ENCODE measurements at regions of chr6 and their contacts with region 1.

Region 1: GRCh38 chr6:139003751-139004150 is 15.7 kb upstream of the REPS1 start:
- DNase-seq: no peak
- ATAC-seq: no peak
- H3K4me3 ChIP-seq: no peak overlapping the region
- H3K4me3 Mint-ChIP-seq: no peak overlapping the region
- H3K27ac ChIP-seq: no peak overlapping the region
- H3K27ac Mint-ChIP-seq: no peak overlapping the region
- H3K4me1 ChIP-seq: no peaks in the 10 kb centered on the region
- H3K4me1 Mint-ChIP-seq: peaks cover 0 to 3% (median 0%) of the 10 kb centered on the region in 7 donors
- H3K27me3 ChIP-seq: no peaks in the 10 kb centered on the region
- H3K27me3 Mint-ChIP-seq: peaks cover 0 to 4% (median 4%) of the 10 kb centered on the region in 5 donors

Region 2: GRCh38 chr6:138773177-138774091 is 230.3 kb before region 1 on chr6 and contains the start of gene CCDC28A:
- CTCF ChIA-PET with region 1: no interaction called
- POLR2A ChIA-PET with region 1: no interaction called
- intact Hi-C with region 1: no loop called
- DNase-seq: peak; percentile 86 to 98 (median 97)
- ATAC-seq: peak; percentile 93
- H3K4me3 ChIP-seq: peak within 1 kb of the TSS; percentile 94
- H3K4me3 Mint-ChIP-seq: peak within 1 kb of the TSS; percentile 91 to 100 (median 99)
- H3K27ac ChIP-seq: peak within 1 kb of the TSS; percentile 87
- H3K27ac Mint-ChIP-seq: peak within 1 kb of the TSS; percentile 96 to 100 (median 100)
- H3K4me1 ChIP-seq: peaks cover 6 to 10% of the 10 kb centered on the region in 2 donors
- H3K4me1 Mint-ChIP-seq: peaks cover 4 to 39% (median 36%) of the 10 kb centered on the region in 7 donors
- H3K27me3 ChIP-seq: no peaks in the 10 kb centered on the region
- H3K27me3 Mint-ChIP-seq: no peaks in the 10 kb centered on the region
- total RNA-seq, gene CCDC28A: 19.9 to 34.2 (median 25.6) TPM

Region 3: GRCh38 chr6:138847884-138848283 is 155.9 kb before region 1 on chr6:
- CTCF ChIA-PET with region 1: no interaction called
- POLR2A ChIA-PET with region 1: no interaction called
- intact Hi-C with region 1: no loop called
- DNase-seq: no peak
- ATAC-seq: no peak
- H3K4me3 ChIP-seq: no peak overlapping the region
- H3K4me3 Mint-ChIP-seq: no peak overlapping the region
- H3K27ac ChIP-seq: no peak overlapping the region
- H3K27ac Mint-ChIP-seq: no peak overlapping the region
- H3K4me1 ChIP-seq: no peaks in the 10 kb centered on the region
- H3K4me1 Mint-ChIP-seq: peaks cover 0 to 1% (median 0%) of the 10 kb centered on the region in 7 donors
- H3K27me3 ChIP-seq: no peaks in the 10 kb centered on the region
- H3K27me3 Mint-ChIP-seq: peaks cover 0 to 5% (median 0%) of the 10 kb centered on the region in 5 donors

Region 4: DNA sequence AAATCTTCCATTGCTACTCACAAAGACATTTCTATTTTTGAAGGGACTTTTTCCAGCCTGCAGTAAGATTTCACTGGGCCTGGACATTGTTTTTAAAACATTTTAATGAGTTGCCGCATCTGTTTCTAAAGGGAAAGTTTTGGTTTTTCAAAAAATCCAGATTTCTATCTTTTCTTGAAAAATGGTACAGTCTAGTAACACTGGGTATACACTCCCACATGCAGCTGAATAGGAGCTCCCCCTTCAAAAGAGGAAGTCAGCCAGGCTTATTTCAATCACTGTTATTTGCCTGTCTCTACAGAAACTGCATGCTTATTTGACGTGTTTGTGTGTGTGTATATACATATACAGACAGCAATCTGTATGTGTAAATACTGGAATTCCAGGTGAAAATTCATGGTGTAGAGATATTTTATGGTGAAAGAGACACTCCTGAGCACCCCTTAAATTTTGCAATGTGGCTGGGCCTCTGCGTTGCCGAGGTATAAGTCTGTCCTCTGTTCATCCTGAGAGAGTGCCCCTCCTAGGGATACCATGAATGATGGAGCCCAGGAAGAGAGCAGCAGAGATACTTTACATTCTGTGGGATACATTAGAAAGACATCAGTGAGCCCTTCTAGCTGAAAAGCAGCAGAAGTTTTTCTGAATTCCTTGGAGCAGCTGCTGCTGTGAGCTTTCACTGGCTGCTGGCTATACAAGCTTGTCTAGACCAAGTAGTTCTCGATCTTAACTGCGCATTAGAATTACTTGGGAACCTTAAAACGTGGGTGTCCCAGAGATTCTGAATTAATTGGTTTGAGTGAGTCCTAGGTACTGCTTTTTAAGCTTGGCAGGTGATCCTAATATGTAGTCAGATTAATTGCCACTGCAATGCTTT is 12.8 kb after region 1 on chr6:
- CTCF ChIA-PET with region 1: no interaction called
- POLR2A ChIA-PET with region 1: no interaction called
- intact Hi-C with region 1: loop called in 1 of 2 experiments (anchors 2 kb)
- DNase-seq: peak in 3 of 9 donors; percentile 7 to 8 (median 7)
- ATAC-seq: peak; percentile 52
- H3K4me3 ChIP-seq: no peak overlapping the region
- H3K4me3 Mint-ChIP-seq: peak overlapping the region in 6 of 10 donors; percentile 7 to 60 (median 40)
- H3K27ac ChIP-seq: no peak overlapping the region
- H3K27ac Mint-ChIP-seq: peak overlapping the region in 2 of 9 donors; percentile 63 to 73
- H3K4me1 ChIP-seq: peaks cover 0 to 5% of the 10 kb centered on the region in 2 donors
- H3K4me1 Mint-ChIP-seq: peaks cover 0 to 23% (median 12%) of the 10 kb centered on the region in 7 donors
- H3K27me3 ChIP-seq: no peaks in the 10 kb centered on the region
- H3K27me3 Mint-ChIP-seq: peaks cover 0 to 11% (median 0%) of the 10 kb centered on the region in 5 donors

Region 5: GRCh38 chr6:139080255-139080920 is 76.6 kb after region 1 on chr6:
- CTCF ChIA-PET with region 1: no interaction called
- POLR2A ChIA-PET with region 1: no interaction called
- intact Hi-C with region 1: no loop called
- DNase-seq: no peak
- ATAC-seq: no peak
- H3K4me3 ChIP-seq: no peak overlapping the region
- H3K4me3 Mint-ChIP-seq: no peak overlapping the region
- H3K27ac ChIP-seq: no peak overlapping the region
- H3K27ac Mint-ChIP-seq: no peak overlapping the region
- H3K4me1 ChIP-seq: no peaks in the 10 kb centered on the region
- H3K4me1 Mint-ChIP-seq: peaks cover 0 to 11% (median 8%) of the 10 kb centered on the region in 7 donors
- H3K27me3 ChIP-seq: no peaks in the 10 kb centered on the region
- H3K27me3 Mint-ChIP-seq: no peaks in the 10 kb centered on the region